ENCODE measurements at regions of chr11 and their contacts with region 1.

Region 1: DNA sequence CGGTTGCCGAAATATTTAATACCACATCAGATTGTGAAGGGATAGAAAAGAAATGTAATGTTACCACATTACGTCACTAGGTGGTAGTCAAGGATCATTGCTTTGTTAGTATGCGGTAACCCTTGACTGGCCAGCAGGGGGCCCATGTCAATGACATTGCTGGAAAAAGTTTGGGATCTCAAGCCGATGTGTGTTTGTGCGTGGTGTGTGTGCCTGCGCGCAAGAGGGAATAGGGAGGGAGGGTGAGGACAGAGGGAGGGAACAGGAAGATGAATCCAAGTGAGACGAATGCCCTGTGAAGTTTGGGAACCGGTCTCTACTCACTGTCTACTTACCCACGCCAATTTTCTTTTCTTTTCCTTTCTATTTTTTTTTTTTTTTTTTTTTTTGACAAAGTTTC is 10.7 kb upstream of the MRGPRX2 start:
- DNase-seq: peak in 4 of 5 donors; percentile 46 to 54 (median 49)
- H3K4me3 ChIP-seq: no peak overlapping the region
- H3K4me3 Mint-ChIP-seq: peak overlapping the region; percentile 4 to 78 (median 60)
- H3K27ac ChIP-seq: no peak overlapping the region
- H3K27ac Mint-ChIP-seq: peak overlapping the region in 3 of 7 donors; percentile 27 to 65 (median 29)
- H3K4me1 ChIP-seq: no peaks in the 10 kb centered on the region
- H3K4me1 Mint-ChIP-seq: peaks cover 4 to 7% (median 5%) of the 10 kb centered on the region in 4 donors
- H3K27me3 ChIP-seq: no peaks in the 10 kb centered on the region
- H3K27me3 Mint-ChIP-seq: peaks cover 8 to 12% of the 10 kb centered on the region in 2 donors

Region 2: DNA sequence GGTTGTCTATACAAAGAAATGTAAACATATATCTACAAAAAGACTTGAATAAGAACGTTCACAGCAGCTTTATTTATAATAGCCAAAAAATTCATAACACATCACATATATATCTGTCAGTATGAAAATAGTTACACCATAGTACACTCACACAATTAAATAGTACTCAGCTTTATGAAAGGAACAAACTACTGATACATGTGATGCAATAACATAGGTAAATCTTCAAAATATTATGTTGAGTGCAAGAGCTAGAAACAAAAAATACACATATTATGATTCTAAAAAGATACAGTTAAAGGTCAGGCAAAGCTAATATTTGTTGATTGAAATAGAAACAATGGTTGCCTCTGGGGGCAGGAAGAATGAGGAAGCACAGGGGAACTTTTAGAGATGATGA is 17.3 kb before region 1 on chr11:
- CTCF ChIA-PET with region 1: interaction called, 50 read pairs
- POLR2A ChIA-PET with region 1: no interaction called
- intact Hi-C with region 1: no loop called
- DNase-seq: no peak
- H3K4me3 ChIP-seq: no peak overlapping the region
- H3K4me3 Mint-ChIP-seq: no peak overlapping the region
- H3K27ac ChIP-seq: no peak overlapping the region
- H3K27ac Mint-ChIP-seq: no peak overlapping the region
- H3K4me1 ChIP-seq: no peaks in the 10 kb centered on the region
- H3K4me1 Mint-ChIP-seq: no peaks in the 10 kb centered on the region
- H3K27me3 ChIP-seq: no peaks in the 10 kb centered on the region
- H3K27me3 Mint-ChIP-seq: peaks cover 0 to 3% of the 10 kb centered on the region in 2 donors

Region 3: GRCh38 chr11:19060629-19061028 is 10.6 kb before region 1 on chr11 and contains the start of gene MRGPRX2:
- CTCF ChIA-PET with region 1: interaction called, 50 read pairs
- POLR2A ChIA-PET with region 1: no interaction called
- intact Hi-C with region 1: no loop called
- DNase-seq: peak in 1 of 5 donors; percentile 1
- H3K4me3 ChIP-seq: no peak within 1 kb of the TSS
- H3K4me3 Mint-ChIP-seq: peak within 1 kb of the TSS in 7 of 8 donors; percentile 4 to 70 (median 35)
- H3K27ac ChIP-seq: no peak within 1 kb of the TSS
- H3K27ac Mint-ChIP-seq: peak within 1 kb of the TSS in 5 of 7 donors; percentile 25 to 71 (median 54)
- H3K4me1 ChIP-seq: peaks cover 20% of the 10 kb centered on the region
- H3K4me1 Mint-ChIP-seq: peaks cover 15 to 29% (median 21%) of the 10 kb centered on the region in 4 donors
- H3K27me3 ChIP-seq: no peaks in the 10 kb centered on the region
- H3K27me3 Mint-ChIP-seq: peaks cover 0 to under 1% of the 10 kb centered on the region in 2 donors
- total RNA-seq, gene MRGPRX2: not detected

Region 4: GRCh38 chr11:19110280-19110679 is 39.0 kb after region 1 on chr11:
- CTCF ChIA-PET with region 1: interaction called, 16 read pairs
- POLR2A ChIA-PET with region 1: no interaction called
- intact Hi-C with region 1: no loop called
- DNase-seq: no peak
- H3K4me3 ChIP-seq: no peak overlapping the region
- H3K4me3 Mint-ChIP-seq: no peak overlapping the region
- H3K27ac ChIP-seq: no peak overlapping the region
- H3K27ac Mint-ChIP-seq: no peak overlapping the region
- H3K4me1 ChIP-seq: no peaks in the 10 kb centered on the region
- H3K4me1 Mint-ChIP-seq: no peaks in the 10 kb centered on the region
- H3K27me3 ChIP-seq: no peaks in the 10 kb centered on the region
- H3K27me3 Mint-ChIP-seq: peaks cover 3 to 16% of the 10 kb centered on the region in 2 donors

Region 5: GRCh38 chr11:19553683-19554333 is 482.6 kb after region 1 on chr11:
- CTCF ChIA-PET with region 1: interaction called, 9 read pairs
- POLR2A ChIA-PET with region 1: no interaction called
- intact Hi-C with region 1: loop called (anchors 1 kb)
- DNase-seq: peak; percentile 35 to 51 (median 43)
- H3K4me3 ChIP-seq: no peak overlapping the region
- H3K4me3 Mint-ChIP-seq: no peak overlapping the region
- H3K27ac ChIP-seq: no peak overlapping the region
- H3K27ac Mint-ChIP-seq: no peak overlapping the region
- H3K4me1 ChIP-seq: no peaks in the 10 kb centered on the region
- H3K4me1 Mint-ChIP-seq: peaks cover 0 to 4% (median 2%) of the 10 kb centered on the region in 4 donors
- H3K27me3 ChIP-seq: no peaks in the 10 kb centered on the region
- H3K27me3 Mint-ChIP-seq: peaks cover 4 to 13% of the 10 kb centered on the region in 2 donors

Region 6: DNA sequence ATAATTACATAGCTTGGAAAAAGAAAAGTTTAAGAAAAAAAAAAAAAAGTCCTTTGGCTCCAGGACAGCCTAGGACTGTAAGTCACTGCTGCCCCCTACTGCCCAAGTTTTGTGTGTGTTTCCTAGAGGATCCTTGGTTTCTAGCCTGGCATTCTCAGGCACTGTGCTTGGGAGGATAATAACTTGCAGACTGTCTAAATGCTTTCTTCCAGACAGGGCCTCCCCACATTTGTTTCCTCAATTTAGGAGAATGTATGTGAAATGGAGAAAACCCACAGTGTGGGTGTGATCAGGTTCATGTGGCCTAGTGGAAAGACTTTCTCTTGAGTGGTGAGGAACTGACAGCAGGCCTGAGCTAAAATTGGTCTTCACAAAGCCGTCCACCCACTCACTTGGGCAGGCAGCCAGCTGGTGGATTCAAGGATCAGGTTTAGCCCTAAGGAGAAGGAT is 832.4 kb after region 1 on chr11:
- CTCF ChIA-PET with region 1: no interaction called
- POLR2A ChIA-PET with region 1: no interaction called
- intact Hi-C with region 1: loop called (anchors 10 kb)
- DNase-seq: peak in 4 of 5 donors; percentile 8 to 27 (median 19)
- H3K4me3 ChIP-seq: no peak overlapping the region
- H3K4me3 Mint-ChIP-seq: no peak overlapping the region
- H3K27ac ChIP-seq: no peak overlapping the region
- H3K27ac Mint-ChIP-seq: no peak overlapping the region
- H3K4me1 ChIP-seq: no peaks in the 10 kb centered on the region
- H3K4me1 Mint-ChIP-seq: no peaks in the 10 kb centered on the region
- H3K27me3 ChIP-seq: no peaks in the 10 kb centered on the region
- H3K27me3 Mint-ChIP-seq: peaks cover 0 to 2% of the 10 kb centered on the region in 2 donors